ENCODE measurements at regions of chr13 and their contacts with region 1.

Region 1: DNA sequence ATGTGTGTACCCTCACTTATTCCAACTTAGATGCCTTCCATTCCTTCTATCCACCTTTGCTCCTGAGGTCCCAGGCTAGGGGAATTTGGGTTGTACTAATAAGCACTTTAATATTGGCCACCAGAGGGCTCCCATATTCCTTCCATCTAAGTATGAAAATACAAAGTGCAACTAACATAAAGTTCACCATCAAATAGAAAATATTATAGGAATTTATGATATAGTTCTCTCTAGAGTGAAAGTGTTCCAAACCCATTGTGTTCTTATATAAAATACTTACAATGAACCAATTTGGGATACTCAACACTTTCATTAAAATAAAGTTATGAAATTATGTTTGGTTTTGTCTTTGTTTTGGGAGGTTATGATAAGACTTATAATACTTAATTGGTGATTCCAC is 62.3 kb downstream of the ITGBL1 start:
- DNase-seq: peak; percentile 48
- ATAC-seq: peak; percentile 78
- H3K4me3 ChIP-seq: no peak overlapping the region
- H3K27ac ChIP-seq: no peak overlapping the region
- H3K4me1 ChIP-seq: no peaks in the 10 kb centered on the region
- H3K27me3 ChIP-seq: no peaks in the 10 kb centered on the region
- CTCF ChIP-seq: peak; percentile 59
- EP300 ChIP-seq: no peak
- POLR2A ChIP-seq: no peak
- RAD21 ChIP-seq: no peak

Region 2: DNA sequence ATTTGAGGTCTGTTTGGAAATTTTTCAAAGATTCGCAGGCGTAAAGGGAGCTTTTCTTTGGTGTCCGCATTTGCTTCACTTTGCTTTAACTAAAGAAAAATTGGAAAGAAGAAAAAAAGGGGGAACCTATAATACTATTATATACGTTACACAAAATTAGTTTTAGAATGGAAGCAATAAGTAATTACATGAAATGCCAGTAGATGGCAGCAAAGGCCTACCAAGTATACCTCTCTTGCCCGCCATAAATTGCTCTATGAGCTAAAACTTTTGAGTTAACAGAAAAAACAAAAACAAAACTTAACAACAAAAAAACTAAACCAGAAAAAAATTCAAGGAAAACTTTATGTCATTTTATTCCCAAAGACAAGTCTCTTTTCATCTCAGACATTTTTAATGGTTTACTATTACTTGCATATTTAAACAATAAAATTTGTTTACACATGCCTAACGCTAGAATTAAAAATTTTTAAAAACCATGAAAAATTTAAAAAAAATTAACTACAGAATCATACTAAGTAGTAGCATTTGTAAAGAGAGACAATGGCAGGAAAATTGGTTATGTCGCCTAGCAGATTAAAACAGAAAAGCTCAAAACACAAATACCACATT is 369.9 kb before region 1 on chr13:
- CTCF ChIA-PET with region 1: no interaction called
- POLR2A ChIA-PET with region 1: no interaction called
- in situ Hi-C with region 1: no loop called
- intact Hi-C with region 1: loop called (anchors 1 kb)
- DNase-seq: peak; percentile 38
- ATAC-seq: peak; percentile 64; the same call in 2 of the 3 replicates
- H3K4me3 ChIP-seq: no peak overlapping the region
- H3K27ac ChIP-seq: no peak overlapping the region
- H3K4me1 ChIP-seq: no peaks in the 10 kb centered on the region
- H3K27me3 ChIP-seq: peaks cover 1 to 10% of the 10 kb centered on the region in 2 experiments; a peak in 2 of 5 replicates
- CTCF ChIP-seq: peak; percentile 60
- EP300 ChIP-seq: no peak
- POLR2A ChIP-seq: no peak
- RAD21 ChIP-seq: peak; percentile 33; the same call in 1 of the 2 replicates

Region 3: GRCh38 chr13:101474419-101474957 is 40.3 kb before region 1 on chr13:
- CTCF ChIA-PET with region 1: no interaction called
- POLR2A ChIA-PET with region 1: no interaction called
- in situ Hi-C with region 1: no loop called
- intact Hi-C with region 1: no loop called
- DNase-seq: no peak
- ATAC-seq: no peak
- H3K4me3 ChIP-seq: no peak overlapping the region
- H3K27ac ChIP-seq: no peak overlapping the region
- H3K4me1 ChIP-seq: no peaks in the 10 kb centered on the region
- H3K27me3 ChIP-seq: no peaks in the 10 kb centered on the region
- CTCF ChIP-seq: peak; percentile 40
- EP300 ChIP-seq: no peak
- POLR2A ChIP-seq: no peak
- RAD21 ChIP-seq: no peak

Region 4: GRCh38 chr13:101594936-101595335 is 80.1 kb after region 1 on chr13:
- CTCF ChIA-PET with region 1: no interaction called
- POLR2A ChIA-PET with region 1: no interaction called
- in situ Hi-C with region 1: no loop called
- intact Hi-C with region 1: no loop called
- DNase-seq: no peak
- ATAC-seq: no peak
- H3K4me3 ChIP-seq: no peak overlapping the region
- H3K27ac ChIP-seq: no peak overlapping the region
- H3K4me1 ChIP-seq: peaks cover 11% of the 10 kb centered on the region
- H3K27me3 ChIP-seq: no peaks in the 10 kb centered on the region
- CTCF ChIP-seq: no peak
- EP300 ChIP-seq: no peak
- POLR2A ChIP-seq: no peak
- RAD21 ChIP-seq: no peak

Region 5: GRCh38 chr13:101757446-101758039 is 242.8 kb after region 1 on chr13:
- CTCF ChIA-PET with region 1: interaction called, 15 read pairs
- POLR2A ChIA-PET with region 1: no interaction called
- in situ Hi-C with region 1: loop called (anchors 5 kb)
- intact Hi-C with region 1: loop called (anchors 1 kb)
- DNase-seq: no peak
- ATAC-seq: peak; percentile 51; the same call in 2 of the 3 replicates
- H3K4me3 ChIP-seq: no peak overlapping the region
- H3K27ac ChIP-seq: no peak overlapping the region
- H3K4me1 ChIP-seq: no peaks in the 10 kb centered on the region
- H3K27me3 ChIP-seq: no peaks in the 10 kb centered on the region; a peak in 1 of 5 replicates
- CTCF ChIP-seq: peak; percentile 30
- EP300 ChIP-seq: no peak
- POLR2A ChIP-seq: no peak
- RAD21 ChIP-seq: peak; percentile 35; the same call in 1 of the 2 replicates

Region 6: DNA sequence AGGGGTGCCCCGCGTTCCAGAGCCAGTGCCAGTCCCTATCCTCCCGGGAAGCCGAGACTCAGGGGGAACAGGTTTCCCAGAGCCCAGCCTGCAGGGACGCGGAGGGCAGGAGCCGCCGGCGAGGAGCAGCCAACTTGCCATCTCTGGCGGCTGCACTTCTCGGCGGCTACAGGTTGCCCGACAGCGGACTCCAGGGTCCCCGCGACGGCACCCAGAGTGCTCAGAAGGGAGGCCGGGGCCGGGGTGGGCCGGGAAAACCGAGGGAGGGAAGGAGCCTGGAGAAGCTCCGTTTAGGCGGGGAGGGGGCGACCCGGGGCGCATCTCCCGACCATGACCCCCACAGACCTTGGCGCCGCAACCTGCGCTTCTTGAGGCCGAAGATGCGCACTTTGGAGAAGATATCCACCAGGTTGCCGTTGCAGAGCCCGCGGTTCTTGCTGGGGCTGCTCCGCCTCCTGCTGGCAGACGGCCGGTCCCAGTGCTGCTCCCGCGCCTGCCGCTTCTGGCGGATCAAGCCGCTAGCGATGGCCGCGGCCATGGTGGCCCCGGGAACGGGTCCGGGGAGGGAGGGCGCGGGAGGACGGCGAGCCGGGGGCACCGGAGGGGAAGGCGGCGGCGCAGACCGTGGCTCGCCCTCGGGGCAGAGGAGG is 401.4 kb after region 1 on chr13:
- CTCF ChIA-PET with region 1: no interaction called
- POLR2A ChIA-PET with region 1: no interaction called
- in situ Hi-C with region 1: no loop called
- intact Hi-C with region 1: loop called (anchors 5 kb)
- DNase-seq: no peak
- ATAC-seq: peak; percentile 87
- H3K4me3 ChIP-seq: no peak overlapping the region
- H3K27ac ChIP-seq: no peak overlapping the region
- H3K4me1 ChIP-seq: no peaks in the 10 kb centered on the region
- H3K27me3 ChIP-seq: peaks cover 0 to 27% of the 10 kb centered on the region in 2 experiments; a peak in 4 of 5 replicates
- CTCF ChIP-seq: peak; percentile 25
- EP300 ChIP-seq: no peak
- POLR2A ChIP-seq: no peak
- RAD21 ChIP-seq: no peak